ENCODE measurements at regions of chr1 and their contacts with region 1.

Region 1: GRCh38 chr1:2141036-2141435 is 53.5 kb downstream of the FAAP20 start:
- DNase-seq: no peak
- ATAC-seq: no peak
- H3K4me3 ChIP-seq: no peak overlapping the region
- H3K4me3 Mint-ChIP-seq: no peak overlapping the region
- H3K27ac ChIP-seq: no peak overlapping the region
- H3K27ac Mint-ChIP-seq: no peak overlapping the region
- H3K4me1 ChIP-seq: peaks cover 0 to 4% of the 10 kb centered on the region in 2 donors
- H3K4me1 Mint-ChIP-seq: peaks cover 6% of the 10 kb centered on the region
- H3K27me3 ChIP-seq: no peaks in the 10 kb centered on the region
- H3K27me3 Mint-ChIP-seq: no peaks in the 10 kb centered on the region
- CTCF ChIP-seq: no peak

Region 2: GRCh38 chr1:2044510-2045319 is 96.3 kb before region 1 on chr1:
- CTCF ChIA-PET with region 1: interaction called, 16 read pairs
- POLR2A ChIA-PET with region 1: no interaction called
- intact Hi-C with region 1: no loop called
- DNase-seq: peak; percentile 86
- ATAC-seq: peak; percentile 84
- H3K4me3 ChIP-seq: peak overlapping the region in 3 of 5 experiments; percentile 29 to 47 (median 35)
- H3K4me3 Mint-ChIP-seq: peak overlapping the region; percentile 67
- H3K27ac ChIP-seq: no peak overlapping the region
- H3K27ac Mint-ChIP-seq: no peak overlapping the region
- H3K4me1 ChIP-seq: peaks cover 19 to 26% of the 10 kb centered on the region in 2 donors
- H3K4me1 Mint-ChIP-seq: peaks cover 27% of the 10 kb centered on the region
- H3K27me3 ChIP-seq: peaks cover 0 to 39% (median 15%) of the 10 kb centered on the region in 4 experiments
- H3K27me3 Mint-ChIP-seq: peaks cover 14% of the 10 kb centered on the region
- CTCF ChIP-seq: peak; percentile 90

Region 3: DNA sequence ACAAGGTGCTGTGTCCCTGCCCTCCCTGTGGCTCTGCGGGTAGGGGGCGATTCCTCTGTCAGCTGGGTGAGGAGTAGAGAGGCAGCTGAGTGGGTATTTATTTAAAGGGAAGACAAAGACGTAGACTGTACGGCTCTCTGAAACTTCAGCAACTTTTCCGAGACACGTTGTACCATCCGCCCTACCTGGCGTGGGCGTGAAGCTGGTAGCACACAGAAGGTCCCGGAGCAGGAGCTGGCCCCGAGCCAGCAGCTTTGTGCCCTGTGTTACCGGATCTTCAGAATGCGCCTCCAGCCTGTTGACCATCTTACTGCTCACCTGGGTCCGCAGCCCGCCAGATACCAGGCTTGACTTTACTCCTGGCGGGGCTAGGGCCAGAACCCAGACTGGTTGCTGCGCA is 56.0 kb before region 1 on chr1:
- CTCF ChIA-PET with region 1: interaction called, 26 read pairs
- POLR2A ChIA-PET with region 1: no interaction called
- intact Hi-C with region 1: no loop called
- DNase-seq: no peak
- ATAC-seq: no peak
- H3K4me3 ChIP-seq: no peak overlapping the region
- H3K4me3 Mint-ChIP-seq: no peak overlapping the region
- H3K27ac ChIP-seq: no peak overlapping the region
- H3K27ac Mint-ChIP-seq: no peak overlapping the region
- H3K4me1 ChIP-seq: no peaks in the 10 kb centered on the region
- H3K4me1 Mint-ChIP-seq: no peaks in the 10 kb centered on the region
- H3K27me3 ChIP-seq: no peaks in the 10 kb centered on the region
- H3K27me3 Mint-ChIP-seq: no peaks in the 10 kb centered on the region
- CTCF ChIP-seq: no peak

Region 4: GRCh38 chr1:2091611-2092604 is 49.1 kb before region 1 on chr1:
- CTCF ChIA-PET with region 1: interaction called, 51 read pairs
- POLR2A ChIA-PET with region 1: interaction called, 3 read pairs
- intact Hi-C with region 1: no loop called
- DNase-seq: peak; percentile 54
- ATAC-seq: peak; percentile 71
- H3K4me3 ChIP-seq: no peak overlapping the region
- H3K4me3 Mint-ChIP-seq: no peak overlapping the region
- H3K27ac ChIP-seq: no peak overlapping the region
- H3K27ac Mint-ChIP-seq: no peak overlapping the region
- H3K4me1 ChIP-seq: peaks cover 0 to 9% of the 10 kb centered on the region in 2 donors
- H3K4me1 Mint-ChIP-seq: peaks cover 5% of the 10 kb centered on the region
- H3K27me3 ChIP-seq: no peaks in the 10 kb centered on the region
- H3K27me3 Mint-ChIP-seq: no peaks in the 10 kb centered on the region
- CTCF ChIP-seq: peak; percentile 71

Region 5: GRCh38 chr1:2108213-2108876 is 32.7 kb before region 1 on chr1:
- CTCF ChIA-PET with region 1: interaction called, 24 read pairs
- POLR2A ChIA-PET with region 1: no interaction called
- intact Hi-C with region 1: no loop called
- DNase-seq: no peak
- ATAC-seq: peak; percentile 18
- H3K4me3 ChIP-seq: no peak overlapping the region
- H3K4me3 Mint-ChIP-seq: no peak overlapping the region
- H3K27ac ChIP-seq: no peak overlapping the region
- H3K27ac Mint-ChIP-seq: peak overlapping the region; percentile 3
- H3K4me1 ChIP-seq: peaks cover 16 to 19% of the 10 kb centered on the region in 2 donors
- H3K4me1 Mint-ChIP-seq: peaks cover 12% of the 10 kb centered on the region
- H3K27me3 ChIP-seq: no peaks in the 10 kb centered on the region
- H3K27me3 Mint-ChIP-seq: no peaks in the 10 kb centered on the region
- CTCF ChIP-seq: no peak

Region 6: GRCh38 chr1:2158272-2158671 is 17.2 kb after region 1 on chr1:
- CTCF ChIA-PET with region 1: interaction called, 12 read pairs
- POLR2A ChIA-PET with region 1: no interaction called
- intact Hi-C with region 1: no loop called
- DNase-seq: no peak
- ATAC-seq: no peak
- H3K4me3 ChIP-seq: no peak overlapping the region
- H3K4me3 Mint-ChIP-seq: no peak overlapping the region
- H3K27ac ChIP-seq: no peak overlapping the region
- H3K27ac Mint-ChIP-seq: no peak overlapping the region
- H3K4me1 ChIP-seq: no peaks in the 10 kb centered on the region
- H3K4me1 Mint-ChIP-seq: no peaks in the 10 kb centered on the region
- H3K27me3 ChIP-seq: no peaks in the 10 kb centered on the region
- H3K27me3 Mint-ChIP-seq: no peaks in the 10 kb centered on the region
- CTCF ChIP-seq: no peak